PC-9 (cell line): ENCODE measurements at regions of chr3 and their contacts with region 1.

Region 1: DNA sequence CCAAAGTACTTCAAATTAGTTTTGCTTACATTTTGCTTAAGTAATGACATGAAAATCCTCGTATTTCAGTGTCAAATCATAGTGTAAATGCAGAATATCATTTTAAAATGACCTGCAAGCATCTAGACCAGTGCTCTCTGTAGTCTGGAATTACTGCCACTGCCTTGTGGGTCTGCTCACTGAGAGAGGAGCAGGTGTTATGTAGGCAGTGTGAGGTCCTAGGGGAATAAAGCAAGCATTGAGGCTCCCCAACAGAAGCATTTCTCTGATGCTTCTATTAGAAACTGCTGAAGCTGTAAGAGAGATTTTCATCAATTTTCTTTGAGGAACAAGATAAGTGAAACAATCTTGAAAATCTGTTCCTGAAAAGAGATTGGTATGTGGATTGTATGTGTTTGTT is 253.2 kb downstream of the BBX start:
- DNase-seq: no peak
- H3K4me3 ChIP-seq: no peak overlapping the region
- H3K27ac ChIP-seq: no peak overlapping the region
- H3K4me1 ChIP-seq: no peaks in the 10 kb centered on the region
- H3K27me3 ChIP-seq: no peaks in the 10 kb centered on the region
- CTCF ChIP-seq: no peak

Region 2: DNA sequence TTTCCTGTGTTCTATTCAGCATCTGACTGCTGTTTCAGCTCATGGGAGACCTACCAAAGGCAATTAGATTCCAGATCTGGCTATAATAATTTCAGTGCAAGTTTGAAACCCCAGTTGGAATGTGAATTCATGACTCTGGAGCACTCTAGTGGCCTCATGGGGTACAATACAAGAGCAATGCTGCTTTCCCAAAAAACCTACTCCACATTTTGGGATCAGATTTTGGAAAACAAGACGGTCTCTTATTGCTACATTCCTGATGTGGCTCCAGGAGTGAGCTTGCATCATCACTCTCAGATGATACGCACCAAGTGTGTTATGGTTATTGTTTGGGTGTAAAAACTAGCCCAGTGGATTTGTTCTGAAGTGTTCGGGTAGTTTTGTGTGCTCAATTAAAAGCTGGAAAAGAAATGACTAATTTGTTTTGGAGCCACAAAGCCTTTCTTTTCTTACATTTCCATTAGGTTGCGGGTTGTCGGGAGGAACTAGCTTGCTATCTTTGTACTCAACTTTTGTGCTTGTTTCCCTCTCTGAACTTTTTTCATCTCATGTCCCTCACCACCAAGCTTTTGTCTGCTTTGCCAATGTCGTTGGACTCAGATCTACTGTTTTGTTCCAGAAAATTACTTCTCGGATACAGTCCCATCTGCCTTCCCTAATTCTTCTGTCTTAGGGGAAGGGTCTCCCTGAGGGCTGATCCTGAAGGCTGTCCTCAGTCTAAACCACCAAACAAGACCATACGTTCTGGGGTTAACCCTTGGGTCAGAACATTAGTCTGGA is 18.9 kb after region 1 on chr3:
- CTCF ChIA-PET with region 1: no interaction called
- POLR2A ChIA-PET with region 1: interaction called, 11 read pairs
- intact Hi-C with region 1: no loop called
- DNase-seq: no peak
- H3K4me3 ChIP-seq: no peak overlapping the region
- H3K27ac ChIP-seq: no peak overlapping the region
- H3K4me1 ChIP-seq: peaks cover 27% of the 10 kb centered on the region
- H3K27me3 ChIP-seq: no peaks in the 10 kb centered on the region
- CTCF ChIP-seq: peak; percentile 55; the same call in 1 of the 2 replicates

Region 3: DNA sequence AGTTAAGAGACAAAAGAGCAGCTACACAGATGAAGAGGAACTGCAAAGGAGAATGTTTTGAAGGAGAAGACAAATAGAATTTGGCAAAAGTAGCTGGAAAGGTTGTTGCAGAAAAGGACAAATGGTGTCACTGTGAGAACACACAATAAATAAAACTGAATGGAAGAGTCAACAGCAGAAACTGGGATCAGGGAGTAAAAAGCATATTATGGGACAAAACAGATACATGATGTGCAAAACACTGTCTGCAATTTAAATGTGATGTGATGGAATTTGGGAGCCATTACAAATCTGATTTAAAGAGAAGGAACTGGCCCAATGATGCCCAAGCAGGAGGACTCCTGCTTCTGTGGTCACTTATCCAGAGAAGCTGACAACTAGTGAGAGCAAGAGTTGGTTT is 268.7 kb after region 1 on chr3:
- CTCF ChIA-PET with region 1: interaction called, 18 read pairs
- POLR2A ChIA-PET with region 1: no interaction called
- intact Hi-C with region 1: no loop called
- DNase-seq: no peak
- H3K4me3 ChIP-seq: no peak overlapping the region
- H3K27ac ChIP-seq: no peak overlapping the region
- H3K4me1 ChIP-seq: no peaks in the 10 kb centered on the region
- H3K27me3 ChIP-seq: no peaks in the 10 kb centered on the region
- CTCF ChIP-seq: no peak

Region 4: GRCh38 chr3:108328821-108329486 is 553.0 kb after region 1 on chr3:
- CTCF ChIA-PET with region 1: no interaction called
- POLR2A ChIA-PET with region 1: no interaction called
- intact Hi-C with region 1: no loop called
- DNase-seq: no peak
- H3K4me3 ChIP-seq: no peak overlapping the region
- H3K27ac ChIP-seq: no peak overlapping the region
- H3K4me1 ChIP-seq: no peaks in the 10 kb centered on the region
- H3K27me3 ChIP-seq: no peaks in the 10 kb centered on the region
- CTCF ChIP-seq: no peak